ENCODE measurements at regions of chr3 and their contacts with region 1.

Region 1: DNA sequence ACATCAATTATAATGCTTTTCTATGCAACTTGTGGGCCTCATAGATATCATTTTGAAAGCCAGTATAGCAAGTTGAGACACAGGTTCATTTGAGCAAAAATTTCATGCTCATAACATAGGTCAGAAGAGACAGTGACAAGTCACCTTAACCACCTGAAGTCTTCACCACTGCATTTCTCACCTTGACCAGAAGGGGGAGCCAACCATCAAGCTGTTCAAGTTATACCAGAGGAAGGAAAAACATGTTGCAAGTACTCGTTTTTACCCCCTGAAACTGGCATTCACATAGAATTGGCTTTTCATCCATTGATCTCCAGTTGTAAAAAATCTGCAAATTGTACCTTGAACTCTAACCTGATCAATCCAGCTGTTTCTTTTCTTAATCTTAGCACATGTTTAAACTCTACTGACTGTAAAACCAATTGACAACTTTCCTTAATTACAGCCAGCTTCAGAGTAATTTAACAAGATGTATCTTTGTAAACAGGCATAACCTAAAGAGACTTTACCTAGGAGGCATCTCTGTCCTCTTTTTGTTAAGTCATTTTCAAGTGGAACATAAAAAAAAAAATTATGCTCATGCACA is 1.4 kb downstream of the LMOD3 start:
- DNase-seq: peak; percentile 35 to 85 (median 78)
- ATAC-seq: peak; percentile 94
- H3K4me3 ChIP-seq: no peak overlapping the region
- H3K4me3 Mint-ChIP-seq: peak overlapping the region in 1 of 10 donors; percentile 16
- H3K27ac ChIP-seq: no peak overlapping the region
- H3K27ac Mint-ChIP-seq: peak overlapping the region in 1 of 9 donors; percentile 31
- H3K4me1 ChIP-seq: no peaks in the 10 kb centered on the region
- H3K4me1 Mint-ChIP-seq: peaks cover 1 to 10% (median 6%) of the 10 kb centered on the region in 7 donors
- H3K27me3 ChIP-seq: no peaks in the 10 kb centered on the region
- H3K27me3 Mint-ChIP-seq: peaks cover 0 to 7% (median 4%) of the 10 kb centered on the region in 5 donors

Region 2: DNA sequence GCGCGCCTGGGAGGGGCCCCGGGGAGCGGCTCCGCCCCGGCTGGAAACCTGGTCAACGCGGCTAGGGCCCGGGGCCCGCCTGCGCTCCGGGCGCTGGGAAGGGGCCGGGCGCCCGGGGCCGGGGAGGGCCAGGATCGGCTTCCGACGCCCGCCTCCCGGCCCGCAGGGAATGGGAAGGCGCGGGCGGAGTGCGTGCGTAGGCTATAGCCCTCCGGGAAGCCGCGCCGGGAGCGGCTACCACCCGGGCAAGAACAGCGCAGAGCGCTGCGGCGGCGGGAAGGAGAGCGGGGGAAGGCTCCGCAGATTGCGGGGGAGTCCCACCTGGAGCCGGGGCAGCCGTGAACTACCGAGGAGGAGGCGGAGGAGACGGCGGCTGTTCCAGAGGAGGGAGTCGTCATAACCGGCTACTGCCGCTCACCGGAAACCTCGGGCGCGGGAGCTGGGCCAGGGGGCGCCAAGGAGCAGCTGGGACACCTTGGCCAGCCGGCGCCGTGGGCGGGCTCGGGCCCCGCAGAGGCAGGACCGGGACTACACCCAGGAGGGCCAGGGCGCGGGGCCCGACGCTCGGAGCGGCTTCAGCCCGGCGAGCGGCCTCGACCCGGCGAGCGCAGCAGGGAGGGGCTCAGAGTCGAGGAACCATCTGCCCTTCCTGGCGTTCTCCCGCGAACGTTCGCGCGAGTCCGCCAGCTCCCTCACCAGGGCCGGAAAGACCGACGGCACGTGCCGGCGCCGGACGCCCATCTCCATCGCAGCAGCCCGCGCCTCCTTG is 107.5 kb before region 1 on chr3 and contains the start of gene EOGT:
- CTCF ChIA-PET with region 1: no interaction called
- POLR2A ChIA-PET with region 1: no interaction called
- intact Hi-C with region 1: loop called in 1 of 2 experiments (anchors 1 kb)
- DNase-seq: peak; percentile 59 to 87 (median 66)
- ATAC-seq: peak; percentile 92
- H3K4me3 ChIP-seq: peak within 1 kb of the TSS; percentile 68
- H3K4me3 Mint-ChIP-seq: peak within 1 kb of the TSS; percentile 84 to 95 (median 93)
- H3K27ac ChIP-seq: peak within 1 kb of the TSS; percentile 78
- H3K27ac Mint-ChIP-seq: peak within 1 kb of the TSS; percentile 32 to 94 (median 82)
- H3K4me1 ChIP-seq: peaks cover 0 to 12% of the 10 kb centered on the region in 2 donors
- H3K4me1 Mint-ChIP-seq: peaks cover 10 to 49% (median 26%) of the 10 kb centered on the region in 7 donors
- H3K27me3 ChIP-seq: no peaks in the 10 kb centered on the region
- H3K27me3 Mint-ChIP-seq: no peaks in the 10 kb centered on the region
- total RNA-seq, gene EOGT: 10.1 to 19.1 (median 13.1) TPM

Region 3: GRCh38 chr3:69084326-69085167 is 36.4 kb before region 1 on chr3 and contains the start of gene ARL6IP5:
- CTCF ChIA-PET with region 1: interaction called, 8 read pairs
- POLR2A ChIA-PET with region 1: interaction called, 3 read pairs
- intact Hi-C with region 1: loop called in 1 of 2 experiments (anchors 1 kb)
- DNase-seq: peak; percentile 71 to 95 (median 93)
- ATAC-seq: peak; percentile 84
- H3K4me3 ChIP-seq: peak within 1 kb of the TSS; percentile 89
- H3K4me3 Mint-ChIP-seq: peak within 1 kb of the TSS; percentile 88 to 99 (median 97)
- H3K27ac ChIP-seq: peak within 1 kb of the TSS; percentile 76
- H3K27ac Mint-ChIP-seq: peak within 1 kb of the TSS; percentile 92 to 99 (median 98)
- H3K4me1 ChIP-seq: peaks cover 58% of the 10 kb centered on the region in 2 donors
- H3K4me1 Mint-ChIP-seq: peaks cover 44 to 72% (median 62%) of the 10 kb centered on the region in 7 donors
- H3K27me3 ChIP-seq: no peaks in the 10 kb centered on the region
- H3K27me3 Mint-ChIP-seq: no peaks in the 10 kb centered on the region
- total RNA-seq, gene ARL6IP5: 75.8 to 226 (median 119) TPM

Region 4: GRCh38 chr3:69092030-69092516 is 28.9 kb before region 1 on chr3:
- CTCF ChIA-PET with region 1: interaction called, 12 read pairs
- POLR2A ChIA-PET with region 1: interaction called, 3 read pairs
- intact Hi-C with region 1: no loop called
- DNase-seq: peak in 7 of 9 donors; percentile 46 to 67 (median 60)
- ATAC-seq: peak; percentile 77
- H3K4me3 ChIP-seq: peak overlapping the region; percentile 40
- H3K4me3 Mint-ChIP-seq: peak overlapping the region; percentile 70 to 94 (median 79)
- H3K27ac ChIP-seq: peak overlapping the region; percentile 76
- H3K27ac Mint-ChIP-seq: peak overlapping the region; percentile 90 to 98 (median 93)
- H3K4me1 ChIP-seq: peaks cover 77 to 83% of the 10 kb centered on the region in 2 donors
- H3K4me1 Mint-ChIP-seq: peaks cover 62 to 93% (median 85%) of the 10 kb centered on the region in 7 donors
- H3K27me3 ChIP-seq: no peaks in the 10 kb centered on the region
- H3K27me3 Mint-ChIP-seq: no peaks in the 10 kb centered on the region

Region 5: GRCh38 chr3:69410250-69410649 is 289.3 kb after region 1 on chr3:
- CTCF ChIA-PET with region 1: interaction called, 5 read pairs
- POLR2A ChIA-PET with region 1: no interaction called
- intact Hi-C with region 1: loop called (anchors 1 kb)
- DNase-seq: peak; percentile 9 to 60 (median 46)
- ATAC-seq: peak; percentile 93
- H3K4me3 ChIP-seq: no peak overlapping the region
- H3K4me3 Mint-ChIP-seq: no peak overlapping the region
- H3K27ac ChIP-seq: no peak overlapping the region
- H3K27ac Mint-ChIP-seq: no peak overlapping the region
- H3K4me1 ChIP-seq: no peaks in the 10 kb centered on the region
- H3K4me1 Mint-ChIP-seq: peaks cover 1 to 10% (median 5%) of the 10 kb centered on the region in 7 donors
- H3K27me3 ChIP-seq: no peaks in the 10 kb centered on the region
- H3K27me3 Mint-ChIP-seq: peaks cover 0 to 3% (median 0%) of the 10 kb centered on the region in 5 donors

Region 6: GRCh38 chr3:69425261-69425660 is 304.3 kb after region 1 on chr3:
- CTCF ChIA-PET with region 1: no interaction called
- POLR2A ChIA-PET with region 1: no interaction called
- intact Hi-C with region 1: loop called in 1 of 2 experiments (anchors 1 kb)
- DNase-seq: peak in 5 of 9 donors; percentile 3 to 20 (median 10)
- ATAC-seq: no peak
- H3K4me3 ChIP-seq: no peak overlapping the region
- H3K4me3 Mint-ChIP-seq: no peak overlapping the region
- H3K27ac ChIP-seq: no peak overlapping the region
- H3K27ac Mint-ChIP-seq: no peak overlapping the region
- H3K4me1 ChIP-seq: no peaks in the 10 kb centered on the region
- H3K4me1 Mint-ChIP-seq: peaks cover 0 to 5% (median 0%) of the 10 kb centered on the region in 7 donors
- H3K27me3 ChIP-seq: no peaks in the 10 kb centered on the region
- H3K27me3 Mint-ChIP-seq: peaks cover 0 to 4% (median 0%) of the 10 kb centered on the region in 5 donors

Region 7: GRCh38 chr3:69671082-69671952 is 550.3 kb after region 1 on chr3:
- CTCF ChIA-PET with region 1: no interaction called
- POLR2A ChIA-PET with region 1: no interaction called
- intact Hi-C with region 1: loop called in 1 of 2 experiments (anchors 1 kb)
- DNase-seq: no peak
- ATAC-seq: no peak
- H3K4me3 ChIP-seq: no peak overlapping the region
- H3K4me3 Mint-ChIP-seq: no peak overlapping the region
- H3K27ac ChIP-seq: no peak overlapping the region
- H3K27ac Mint-ChIP-seq: no peak overlapping the region
- H3K4me1 ChIP-seq: no peaks in the 10 kb centered on the region
- H3K4me1 Mint-ChIP-seq: no peaks in the 10 kb centered on the region
- H3K27me3 ChIP-seq: no peaks in the 10 kb centered on the region
- H3K27me3 Mint-ChIP-seq: peaks cover 0 to 22% (median 4%) of the 10 kb centered on the region in 5 donors

Measured in naive thymus-derived CD4-positive, alpha-beta T cell (primary cell).